ENCODE measurements at regions of chr9 and their contacts with region 1.

Region 1: DNA sequence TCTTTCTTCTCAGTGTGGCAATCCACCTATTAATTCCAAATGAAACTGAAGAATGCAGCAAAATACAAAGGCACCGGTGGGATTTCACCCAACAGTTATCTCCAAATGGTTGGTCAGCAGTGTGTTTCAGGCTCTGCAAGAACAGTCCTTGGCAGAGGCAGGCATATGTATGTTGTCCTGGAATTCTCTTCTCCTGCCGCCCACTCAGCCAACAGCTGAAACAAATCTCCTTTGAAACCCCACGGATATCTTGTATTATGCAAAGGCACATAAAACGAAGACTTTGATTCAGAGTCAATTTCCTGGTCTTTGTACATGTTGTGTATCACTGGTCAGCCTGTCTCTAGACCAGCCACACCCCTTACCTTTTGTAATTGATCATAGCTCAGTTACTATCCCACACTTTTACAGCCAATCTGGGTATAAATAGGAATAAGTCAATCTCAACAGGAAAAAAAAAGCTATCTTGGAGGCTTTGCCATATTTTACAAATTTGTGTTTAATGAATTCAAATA is 29.2 kb downstream of the FREM1 start:
- DNase-seq: no peak
- H3K4me3 ChIP-seq: no peak overlapping the region
- H3K27ac ChIP-seq: no peak overlapping the region
- H3K4me1 ChIP-seq: no peaks in the 10 kb centered on the region
- H3K27me3 ChIP-seq: no peaks in the 10 kb centered on the region
- CTCF ChIP-seq: no peak

Region 2: GRCh38 chr9:14488421-14489195 is 392.4 kb before region 1 on chr9:
- intact Hi-C with region 1: no loop called
- DNase-seq: no peak
- H3K4me3 ChIP-seq: no peak overlapping the region
- H3K27ac ChIP-seq: no peak overlapping the region
- H3K4me1 ChIP-seq: no peaks in the 10 kb centered on the region
- H3K27me3 ChIP-seq: no peaks in the 10 kb centered on the region
- CTCF ChIP-seq: no peak

Region 3: DNA sequence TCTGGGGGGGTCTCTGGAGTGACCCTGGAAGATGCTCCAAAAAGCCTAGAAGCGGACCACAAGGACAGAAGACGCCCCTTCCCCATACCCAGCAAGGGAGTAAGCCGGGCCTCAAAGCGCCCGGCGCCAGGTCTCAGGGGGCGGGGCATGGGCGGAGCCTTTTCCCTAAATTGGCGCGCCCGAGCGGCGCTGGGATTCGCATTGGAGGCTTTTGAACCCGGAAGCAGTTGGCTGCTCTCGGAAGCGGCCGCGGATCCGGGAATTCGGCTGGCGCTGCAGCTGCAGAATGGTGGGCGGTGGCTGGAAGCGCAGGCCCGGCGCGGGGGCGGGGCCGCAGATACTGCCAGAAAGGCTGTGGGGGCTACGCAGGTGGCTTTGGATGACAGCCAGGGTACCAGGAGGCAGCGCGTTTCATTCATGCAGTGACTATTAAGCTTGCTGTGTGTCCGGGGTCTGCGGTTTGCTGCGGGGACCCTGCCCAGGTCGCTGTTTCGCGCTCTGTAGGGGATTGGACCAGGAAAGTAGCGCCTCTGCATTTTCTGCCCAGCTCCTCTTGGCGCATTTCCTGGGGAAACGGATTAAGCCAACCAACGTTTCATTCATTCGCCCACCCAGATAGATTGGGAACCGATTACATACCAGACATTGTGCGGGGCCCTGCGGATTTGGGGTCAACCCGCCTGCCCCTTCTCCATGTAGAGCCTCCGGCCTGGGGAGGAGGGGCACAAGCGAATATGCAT is 112.2 kb after region 1 on chr9:
- intact Hi-C with region 1: loop called (anchors 10 kb)
- DNase-seq: peak; percentile 84
- H3K4me3 ChIP-seq: peak overlapping the region; percentile 46
- H3K27ac ChIP-seq: no peak overlapping the region
- H3K4me1 ChIP-seq: no peaks in the 10 kb centered on the region
- H3K27me3 ChIP-seq: no peaks in the 10 kb centered on the region
- CTCF ChIP-seq: no peak